AG04449 (cell line): ENCODE measurements at regions of chr9 and their contacts with region 1.

Region 1: GRCh38 chr9:14353222-14354056 is 39.5 kb upstream of the NFIB start:
- DNase-seq: no peak
- H3K4me3 ChIP-seq: no peak overlapping the region
- CTCF ChIP-seq: peak; percentile 93

Region 2: GRCh38 chr9:13033959-13034693 is 1319.3 kb before region 1 on chr9:
- CTCF ChIA-PET with region 1: interaction called, 12 read pairs
- POLR2A ChIA-PET with region 1: no interaction called
- DNase-seq: no peak
- H3K4me3 ChIP-seq: peak overlapping the region; percentile 39; the same call in 1 of the 2 replicates
- CTCF ChIP-seq: peak; percentile 86

Region 3: GRCh38 chr9:13351778-13352386 is 1001.6 kb before region 1 on chr9:
- CTCF ChIA-PET with region 1: interaction called, 19 read pairs
- POLR2A ChIA-PET with region 1: no interaction called
- DNase-seq: no peak
- H3K4me3 ChIP-seq: no peak overlapping the region
- CTCF ChIP-seq: peak; percentile 24

Region 4: GRCh38 chr9:13427587-13427986 is 925.9 kb before region 1 on chr9:
- CTCF ChIA-PET with region 1: interaction called, 30 read pairs
- POLR2A ChIA-PET with region 1: no interaction called
- DNase-seq: no peak
- H3K4me3 ChIP-seq: no peak overlapping the region
- CTCF ChIP-seq: peak; percentile 31

Region 5: DNA sequence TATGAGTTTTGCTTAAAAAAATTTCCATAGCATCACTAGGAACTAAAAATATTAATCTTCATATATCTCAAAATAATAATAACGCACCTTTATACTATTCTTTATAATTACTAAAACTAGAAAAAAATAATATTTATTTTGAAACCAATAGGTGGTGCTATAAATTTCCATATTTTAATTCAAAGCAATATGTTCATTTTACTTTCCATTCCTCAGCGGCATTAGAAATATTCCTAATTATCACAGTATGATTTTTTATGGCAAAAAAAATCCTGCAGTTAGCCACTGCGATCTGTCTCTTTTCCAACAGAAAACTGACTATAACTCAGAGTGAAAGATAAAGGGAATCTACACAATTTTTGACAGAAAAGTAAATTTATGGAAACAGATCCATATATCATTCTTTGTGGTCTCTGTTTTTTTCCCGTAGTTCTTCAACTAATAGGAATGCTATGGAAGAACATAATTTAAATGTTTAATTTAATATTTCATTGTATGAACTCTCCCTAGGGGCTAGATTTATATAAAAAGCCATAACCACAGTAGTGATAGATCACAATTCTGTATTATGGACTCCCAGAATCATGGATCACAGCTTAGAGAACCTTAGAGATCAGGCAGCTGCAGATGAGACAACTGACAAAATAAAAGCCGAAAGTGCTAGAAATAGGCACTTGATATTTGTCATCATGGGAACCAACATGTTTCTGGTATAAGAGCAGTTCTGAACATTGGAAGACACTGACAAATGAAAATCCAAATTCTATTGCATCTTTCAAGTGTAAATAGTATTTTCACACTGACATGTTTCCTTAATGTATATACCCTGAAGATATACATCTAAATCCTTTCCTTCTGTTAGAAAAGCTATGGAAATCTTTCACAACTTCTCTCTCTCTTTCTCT is 906.2 kb before region 1 on chr9:
- CTCF ChIA-PET with region 1: interaction called, 12 read pairs
- POLR2A ChIA-PET with region 1: no interaction called
- DNase-seq: no peak
- H3K4me3 ChIP-seq: no peak overlapping the region
- CTCF ChIP-seq: no peak

Region 6: DNA sequence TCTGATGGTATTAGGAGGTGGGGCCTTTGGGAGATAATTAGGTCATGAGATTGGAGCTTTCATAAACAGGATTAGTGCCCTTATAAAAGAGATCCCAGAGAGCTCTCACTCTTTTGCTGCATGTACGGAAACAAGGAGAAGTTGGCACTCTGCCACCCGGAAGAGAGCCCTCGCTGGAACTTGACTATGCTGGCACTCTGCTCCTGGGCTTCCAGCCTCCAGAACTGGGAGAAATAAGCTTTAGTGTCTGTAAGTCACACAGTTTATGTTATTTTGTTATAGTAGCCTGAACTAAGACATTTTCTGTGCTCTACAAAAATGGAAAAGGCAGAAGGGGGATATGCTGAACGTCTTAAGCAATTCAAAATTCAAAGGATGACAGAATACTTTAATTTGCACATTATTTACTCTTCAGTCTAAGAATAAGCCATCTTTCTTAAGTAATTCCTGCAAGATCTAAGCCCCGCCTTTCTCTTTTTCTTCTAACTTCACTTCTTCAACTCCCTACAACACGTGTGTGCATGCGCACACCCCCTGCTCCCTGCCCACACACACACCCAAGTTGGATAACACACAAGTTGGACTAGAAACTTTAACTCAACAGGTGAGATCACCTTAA is 56.8 kb before region 1 on chr9:
- CTCF ChIA-PET with region 1: no interaction called
- POLR2A ChIA-PET with region 1: no interaction called
- DNase-seq: no peak
- H3K4me3 ChIP-seq: no peak overlapping the region
- CTCF ChIP-seq: no peak

Region 7: GRCh38 chr9:14369011-14369410 is 15.6 kb after region 1 on chr9:
- CTCF ChIA-PET with region 1: interaction called, 44 read pairs
- POLR2A ChIA-PET with region 1: no interaction called
- DNase-seq: no peak
- H3K4me3 ChIP-seq: no peak overlapping the region
- CTCF ChIP-seq: no peak